HepG2 (cell line): ENCODE measurements at regions of chr7 and their contacts with region 1.

Region 1: GRCh38 chr7:155618708-155619633 is 25.5 kb upstream of the RBM33 start:
- DNase-seq: peak; percentile 98
- ATAC-seq: peak; percentile 98
- H3K4me3 ChIP-seq: peak overlapping the region in 2 of 3 experiments; percentile 46 to 68; a peak in 3 of 6 replicates
- H3K27ac ChIP-seq: peak overlapping the region; percentile 100
- H3K4me1 ChIP-seq: peaks cover 66% of the 10 kb centered on the region
- H3K27me3 ChIP-seq: no peaks in the 10 kb centered on the region
- CTCF ChIP-seq: peak; percentile 38; the same call in 1 of the 2 replicates
- EP300 ChIP-seq: peak in 1 of 2 experiments; percentile 88; a peak in 3 of 4 replicates
- POLR2A ChIP-seq: peak; percentile 63 to 82
- RAD21 ChIP-seq: 0 out of 2 replicates have a peak, but pooled peaks have one; percentile 9

Region 2: GRCh38 chr7:155644178-155644970 is 25.4 kb after region 1 on chr7 and contains the start of gene RBM33:
- CTCF ChIA-PET with region 1: interaction called, 3 read pairs
- POLR2A ChIA-PET with region 1: interaction called, 72 read pairs
- in situ Hi-C with region 1: no loop called
- intact Hi-C with region 1: loop called (anchors 1 kb)
- DNase-seq: peak; percentile 88
- ATAC-seq: peak; percentile 94
- H3K4me3 ChIP-seq: peak within 1 kb of the TSS; percentile 80 to 95 (median 94)
- H3K27ac ChIP-seq: peak within 1 kb of the TSS; percentile 97
- H3K4me1 ChIP-seq: peaks cover 53% of the 10 kb centered on the region
- H3K27me3 ChIP-seq: no peaks in the 10 kb centered on the region; a peak in 1 of 5 replicates
- CTCF ChIP-seq: peak; percentile 17; the same call in 1 of the 2 replicates
- EP300 ChIP-seq: no peak
- POLR2A ChIP-seq: peak; percentile 79 to 92
- RAD21 ChIP-seq: peak; percentile 39
- total RNA-seq, gene RBM33: 22.3 and 28.9 TPM in 2 replicates

Region 3: GRCh38 chr7:155656891-155657290 is 37.9 kb after region 1 on chr7:
- CTCF ChIA-PET with region 1: no interaction called
- POLR2A ChIA-PET with region 1: interaction called, 12 read pairs
- in situ Hi-C with region 1: no loop called
- intact Hi-C with region 1: no loop called
- DNase-seq: no peak
- ATAC-seq: no peak
- H3K4me3 ChIP-seq: no peak overlapping the region
- H3K27ac ChIP-seq: no peak overlapping the region
- H3K4me1 ChIP-seq: peaks cover 55% of the 10 kb centered on the region
- H3K27me3 ChIP-seq: no peaks in the 10 kb centered on the region
- CTCF ChIP-seq: no peak
- EP300 ChIP-seq: no peak
- POLR2A ChIP-seq: no peak
- RAD21 ChIP-seq: no peak